OCI-LY7 (cell line): ENCODE measurements at regions of chr13 and their contacts with region 1.

Region 1: DNA sequence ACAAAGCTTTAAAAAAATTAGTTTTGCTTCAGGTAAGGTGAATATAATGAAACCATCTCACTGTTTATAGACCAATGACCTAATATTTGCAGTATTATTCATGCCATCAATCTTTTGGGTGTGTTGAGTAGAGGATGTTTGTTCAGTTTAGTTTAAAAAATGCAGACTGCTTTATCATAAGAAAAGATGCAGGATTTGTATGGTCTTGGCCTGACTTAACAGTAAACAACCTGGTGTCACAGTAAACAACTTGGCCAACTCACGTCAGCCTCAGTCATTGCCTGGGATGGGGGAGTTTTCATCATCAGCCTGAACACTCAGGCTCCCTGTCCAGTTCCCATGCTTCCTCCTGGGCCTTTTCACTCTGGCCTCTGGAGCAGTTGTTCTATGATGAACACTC is 55.1 kb downstream of the LMO7 start:
- DNase-seq: no peak
- H3K4me3 ChIP-seq: no peak overlapping the region
- H3K27ac ChIP-seq: no peak overlapping the region
- H3K4me1 ChIP-seq: no peaks in the 10 kb centered on the region
- CTCF ChIP-seq: no peak

Region 2: GRCh38 chr13:75864718-75865117 is 173.5 kb after region 1 on chr13:
- CTCF ChIA-PET with region 1: no interaction called
- POLR2A ChIA-PET with region 1: no interaction called
- intact Hi-C with region 1: loop called (anchors 10 kb)
- DNase-seq: no peak
- H3K4me3 ChIP-seq: no peak overlapping the region
- H3K27ac ChIP-seq: no peak overlapping the region
- H3K4me1 ChIP-seq: no peaks in the 10 kb centered on the region
- CTCF ChIP-seq: no peak